Vagina (tissue), 2 donors: ENCODE measurements at regions of chr3 and their contacts with region 1.

Region 1: DNA sequence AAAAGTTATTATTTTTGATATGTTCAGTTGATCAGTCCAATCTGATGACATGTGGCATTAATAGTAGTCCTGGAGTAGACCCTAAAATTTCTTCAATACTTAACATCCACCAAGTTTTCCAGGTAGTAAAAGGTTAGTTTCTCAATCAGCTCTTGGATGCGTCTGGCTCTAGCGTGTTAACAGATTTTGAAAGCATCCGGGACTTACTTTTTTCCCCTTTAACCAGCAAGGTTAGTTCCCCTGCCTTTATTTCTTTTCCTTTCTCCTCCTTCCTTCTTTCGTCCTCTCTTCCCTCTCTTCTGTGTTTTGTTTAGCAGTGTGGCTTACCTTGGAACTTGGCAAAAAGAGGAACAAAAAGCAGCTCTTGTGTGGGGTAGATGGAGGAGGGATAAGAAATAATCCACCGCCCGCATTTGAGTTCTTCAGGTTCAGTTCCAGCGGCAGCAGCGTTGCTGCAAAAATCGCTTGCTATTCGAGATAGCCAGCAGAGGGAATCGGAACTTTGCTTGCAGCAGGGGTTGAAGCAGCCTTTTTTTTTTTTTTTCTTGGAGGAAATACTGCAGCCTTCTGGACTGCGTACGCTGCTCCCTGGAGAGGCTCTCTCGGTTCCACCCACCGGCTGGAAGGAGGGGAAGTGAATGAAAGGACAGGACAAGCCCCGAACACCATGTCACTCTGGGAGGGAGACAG is at the start of gene RBMS3:
- DNase-seq: peak in 1 of 2 donors; percentile 95
- H3K4me3 ChIP-seq: peak within 1 kb of the TSS; percentile 58 to 60
- H3K27ac ChIP-seq: peak within 1 kb of the TSS; percentile 91
- H3K4me1 ChIP-seq: peaks cover 10% of the 10 kb centered on the region
- H3K27me3 ChIP-seq: no peaks in the 10 kb centered on the region
- CTCF ChIP-seq: peak in 1 of 3 experiments; percentile 51
- POLR2A ChIP-seq: peak in 1 of 2 donors; percentile 59
- total RNA-seq, gene RBMS3: 70.0 TPM

Region 2: GRCh38 chr3:29335438-29335837 is 54.9 kb after region 1 on chr3:
- intact Hi-C with region 1: loop called (anchors 10 kb)
- DNase-seq: no peak
- H3K4me3 ChIP-seq: peak overlapping the region; percentile 8 to 17
- H3K27ac ChIP-seq: peak overlapping the region; percentile 69
- H3K4me1 ChIP-seq: peaks cover 48% of the 10 kb centered on the region
- H3K27me3 ChIP-seq: no peaks in the 10 kb centered on the region
- CTCF ChIP-seq: no peak
- POLR2A ChIP-seq: no peak

Region 3: GRCh38 chr3:29693863-29694262 is 413.3 kb after region 1 on chr3:
- intact Hi-C with region 1: loop called (anchors 10 kb)
- DNase-seq: no peak
- H3K4me3 ChIP-seq: no peak overlapping the region
- H3K27ac ChIP-seq: no peak overlapping the region
- H3K4me1 ChIP-seq: peaks cover 28% of the 10 kb centered on the region
- H3K27me3 ChIP-seq: no peaks in the 10 kb centered on the region
- CTCF ChIP-seq: no peak
- POLR2A ChIP-seq: no peak

Region 4: DNA sequence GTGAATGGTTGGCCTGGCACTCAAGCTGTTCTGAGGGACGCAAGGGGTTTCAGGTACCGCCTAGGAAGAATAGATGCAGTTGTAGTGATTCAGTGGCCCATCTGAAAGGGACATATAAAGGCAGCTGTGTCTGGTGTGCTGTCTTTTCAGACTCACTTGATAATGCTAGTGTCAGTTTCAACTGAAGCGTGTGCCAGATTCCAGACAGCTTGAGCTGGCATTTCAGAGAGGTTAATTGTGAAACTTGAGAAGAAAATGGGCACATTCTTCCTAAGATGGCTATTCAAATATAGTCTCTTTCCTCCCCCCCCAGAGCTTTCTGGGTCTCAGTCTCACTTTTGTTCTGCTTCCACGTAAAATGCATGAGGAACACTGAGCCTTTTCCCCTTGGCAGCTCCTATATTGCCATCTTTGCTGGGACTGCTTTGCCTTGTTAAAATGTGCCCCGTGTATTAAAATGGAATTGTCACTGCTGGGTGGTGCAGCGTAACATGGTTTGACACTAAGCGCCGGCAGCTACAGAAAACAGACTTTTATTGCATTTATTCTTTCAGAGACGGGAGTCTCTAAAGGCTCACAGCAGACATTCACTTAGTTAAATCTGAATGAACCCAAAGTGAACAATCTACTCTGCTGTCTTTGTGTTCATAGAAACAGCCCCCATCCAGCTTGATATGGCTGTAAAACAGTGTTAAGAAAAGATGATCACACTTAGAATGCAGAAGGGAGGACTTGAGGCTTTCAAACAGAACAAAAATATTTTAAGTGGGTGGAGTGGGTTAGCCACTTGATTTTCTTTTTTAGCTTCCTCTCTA is 479.1 kb after region 1 on chr3:
- intact Hi-C with region 1: loop called (anchors 10 kb)
- DNase-seq: no peak
- H3K4me3 ChIP-seq: no peak overlapping the region
- H3K27ac ChIP-seq: peak overlapping the region; percentile 65
- H3K4me1 ChIP-seq: peaks cover 33% of the 10 kb centered on the region
- H3K27me3 ChIP-seq: no peaks in the 10 kb centered on the region
- CTCF ChIP-seq: no peak
- POLR2A ChIP-seq: no peak

Region 5: DNA sequence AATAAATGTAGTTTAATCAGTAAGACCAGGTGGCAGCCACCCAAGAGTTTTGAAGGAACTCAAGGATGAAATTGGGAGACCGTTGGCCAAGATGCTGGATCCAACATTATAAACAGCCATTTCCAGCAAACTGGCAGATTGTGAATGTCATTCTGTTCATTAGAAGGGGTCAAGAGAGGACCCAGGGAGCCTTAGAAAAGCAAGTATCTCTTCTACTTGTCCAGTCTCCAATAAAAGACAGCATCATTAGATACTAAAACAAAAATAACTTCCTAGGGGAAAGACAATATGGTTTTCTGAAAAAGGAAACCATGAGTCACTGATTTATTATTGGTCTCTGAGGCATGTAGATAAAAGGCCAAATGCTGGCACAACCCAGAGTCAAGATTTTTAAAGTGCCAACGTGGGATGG is 1546.0 kb after region 1 on chr3:
- intact Hi-C with region 1: loop called (anchors 5 kb)
- DNase-seq: no peak
- H3K4me3 ChIP-seq: no peak overlapping the region
- H3K27ac ChIP-seq: no peak overlapping the region
- H3K4me1 ChIP-seq: peaks cover 6% of the 10 kb centered on the region
- H3K27me3 ChIP-seq: no peaks in the 10 kb centered on the region
- CTCF ChIP-seq: no peak
- POLR2A ChIP-seq: no peak